ENCODE measurements at regions of chrX and their contacts with region 1.

Region 1: GRCh38 chrX:123976706-123977316 is 15.3 kb downstream of the STAG2 start:
- H3K4me3 Mint-ChIP-seq: no peak overlapping the region
- H3K27ac Mint-ChIP-seq: no peak overlapping the region
- H3K4me1 Mint-ChIP-seq: peaks cover 29% of the 10 kb centered on the region
- H3K27me3 Mint-ChIP-seq: no peaks in the 10 kb centered on the region

Region 2: DNA sequence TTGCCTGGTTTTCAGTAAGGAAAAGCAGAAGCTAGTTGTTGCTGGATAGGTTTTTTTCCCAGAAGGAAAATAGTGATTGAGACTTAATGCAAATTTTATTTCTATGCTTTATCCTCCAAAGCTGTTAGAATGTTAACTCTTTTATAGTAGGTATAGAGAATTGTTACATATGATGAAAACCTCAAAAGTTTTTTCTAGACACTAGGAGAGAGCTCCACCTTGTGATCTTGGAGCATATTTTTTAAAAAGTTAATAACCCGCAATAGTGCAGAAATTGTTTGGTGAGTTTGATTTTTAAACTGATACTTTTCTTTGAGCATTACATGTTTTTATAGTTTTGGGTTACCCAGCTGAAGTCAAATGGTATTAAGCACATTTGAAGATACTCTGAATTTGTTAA is 41.2 kb after region 1 on chrX:
- intact Hi-C with region 1: loop called (anchors 5 kb)
- H3K4me3 Mint-ChIP-seq: no peak overlapping the region
- H3K27ac Mint-ChIP-seq: no peak overlapping the region
- H3K4me1 Mint-ChIP-seq: peaks cover 8% of the 10 kb centered on the region
- H3K27me3 Mint-ChIP-seq: no peaks in the 10 kb centered on the region

Region 3: DNA sequence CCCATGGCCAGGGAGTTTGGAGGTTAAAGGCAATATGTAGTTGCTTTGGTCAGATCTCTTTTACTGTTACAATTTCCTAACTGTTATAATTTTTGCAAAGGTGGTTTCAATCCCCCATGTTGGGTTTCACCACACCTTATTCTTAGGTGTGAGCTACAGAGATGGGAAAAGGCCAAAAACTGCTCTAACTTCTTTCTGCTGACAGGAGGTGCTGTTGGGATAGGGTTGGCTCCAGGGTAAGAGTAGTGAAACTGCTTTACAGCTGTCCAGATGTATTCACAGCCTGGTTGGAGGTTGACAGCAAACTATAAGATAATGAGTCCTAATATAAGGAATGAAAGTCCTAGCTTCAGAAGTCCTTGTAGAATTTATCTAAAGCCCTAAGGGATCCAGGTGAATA is 174.4 kb after region 1 on chrX:
- intact Hi-C with region 1: no loop called
- H3K4me3 Mint-ChIP-seq: no peak overlapping the region
- H3K27ac Mint-ChIP-seq: no peak overlapping the region
- H3K4me1 Mint-ChIP-seq: no peaks in the 10 kb centered on the region
- H3K27me3 Mint-ChIP-seq: no peaks in the 10 kb centered on the region